HepG2 (cell line): ENCODE measurements at regions of chr12 and their contacts with region 1.

Region 1: DNA sequence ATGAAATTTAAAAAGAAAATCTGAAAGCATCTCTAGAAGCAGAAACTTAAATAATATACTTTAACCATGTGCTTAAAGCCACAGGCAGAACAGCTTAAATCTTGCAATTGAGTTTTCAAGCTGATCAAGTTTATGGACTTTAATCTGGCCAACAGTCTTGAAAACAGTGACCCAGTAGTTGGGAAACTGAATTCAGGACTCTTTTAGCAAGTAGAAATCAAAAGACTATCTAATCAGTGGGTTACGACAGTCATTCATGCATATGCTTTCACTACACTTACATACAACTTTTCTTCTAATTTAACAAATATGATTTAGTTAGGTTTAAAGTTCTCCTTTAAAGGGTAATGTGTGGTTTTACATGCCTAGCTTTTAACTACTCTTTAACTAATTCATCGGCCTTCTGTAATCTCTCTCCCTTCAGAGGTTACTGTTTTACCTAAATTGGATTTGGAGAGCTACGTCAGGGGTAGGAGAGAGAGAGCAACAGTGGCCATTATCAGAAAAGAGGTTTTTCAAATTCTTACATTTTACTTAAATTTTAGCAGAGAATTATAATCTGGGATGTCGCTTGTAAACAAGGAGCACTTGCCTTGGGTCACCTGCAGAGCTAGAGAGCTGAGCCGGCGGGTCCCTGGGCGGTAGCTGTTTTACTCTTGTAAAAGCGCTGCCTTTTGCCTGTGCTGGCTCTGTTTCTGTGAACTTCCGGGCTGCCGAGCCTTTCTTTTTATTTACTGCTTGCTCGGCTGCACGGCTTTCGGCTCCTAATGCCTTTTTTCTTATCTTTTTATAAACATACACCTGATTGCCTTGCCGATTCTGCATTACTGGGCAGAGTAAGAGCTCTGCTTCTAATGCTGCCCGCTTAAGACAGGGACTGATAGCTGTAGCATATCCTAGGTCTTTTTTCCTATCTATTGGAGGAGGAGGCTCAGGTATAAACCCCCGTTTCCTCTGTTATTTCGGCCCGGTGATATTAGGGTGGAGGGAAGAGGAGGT is 17.4 kb upstream of the LYZ start:
- DNase-seq: no peak
- ATAC-seq: peak; percentile 20
- H3K4me3 ChIP-seq: peak overlapping the region; percentile 64 to 97 (median 88)
- H3K27ac ChIP-seq: peak overlapping the region; percentile 99
- H3K4me1 ChIP-seq: peaks cover 69% of the 10 kb centered on the region
- H3K27me3 ChIP-seq: no peaks in the 10 kb centered on the region; a peak in 1 of 5 replicates
- CTCF ChIP-seq: no peak
- EP300 ChIP-seq: no peak
- POLR2A ChIP-seq: no peak; a peak in 1 of 4 replicates
- RAD21 ChIP-seq: no peak

Region 2: DNA sequence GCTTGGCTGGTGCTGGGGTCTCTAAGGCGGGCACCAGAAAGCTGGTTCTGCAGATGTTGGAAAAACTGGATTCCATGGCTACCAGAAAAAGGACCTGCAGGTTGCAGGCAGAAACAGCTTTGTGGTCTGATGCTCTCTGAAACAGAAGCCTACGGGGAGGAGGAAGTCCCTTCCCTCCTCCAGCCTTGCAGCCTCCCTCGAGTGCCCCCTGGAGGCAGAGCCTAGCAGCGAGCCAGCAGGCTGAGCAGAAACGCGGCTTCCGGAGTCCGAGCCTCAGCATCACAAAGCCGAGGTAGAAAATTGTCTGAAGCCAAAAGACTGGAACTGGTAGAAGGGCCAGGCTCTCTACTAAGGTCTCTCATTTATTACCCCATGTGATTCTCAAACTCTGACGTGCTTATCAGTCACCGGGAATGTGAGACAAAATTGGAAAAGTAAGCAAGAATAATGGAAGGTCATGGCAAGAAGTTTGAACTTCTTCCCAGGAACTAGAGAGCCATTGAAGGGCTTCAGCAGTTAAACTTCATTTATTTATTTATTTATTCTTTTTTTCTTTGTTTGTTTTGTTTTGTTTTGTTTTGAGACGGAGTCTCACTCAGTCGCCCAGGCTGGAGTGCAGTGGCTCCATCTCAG is 173.6 kb before region 1 on chr12:
- CTCF ChIA-PET with region 1: no interaction called
- POLR2A ChIA-PET with region 1: no interaction called
- in situ Hi-C with region 1: no loop called
- intact Hi-C with region 1: loop called (anchors 10 kb)
- DNase-seq: peak; percentile 63
- ATAC-seq: peak; percentile 93
- H3K4me3 ChIP-seq: peak overlapping the region in 1 of 3 experiments; percentile 40; a peak in 1 of 6 replicates
- H3K27ac ChIP-seq: no peak overlapping the region
- H3K4me1 ChIP-seq: peaks cover 19% of the 10 kb centered on the region
- H3K27me3 ChIP-seq: peaks cover 0 to 4% of the 10 kb centered on the region in 2 experiments; a peak in 1 of 5 replicates
- CTCF ChIP-seq: peak; percentile 93
- EP300 ChIP-seq: no peak
- POLR2A ChIP-seq: no peak
- RAD21 ChIP-seq: peak; percentile 53; the same call in 1 of the 2 replicates

Region 3: GRCh38 chr12:69290545-69291277 is 40.1 kb before region 1 on chr12:
- CTCF ChIA-PET with region 1: no interaction called
- POLR2A ChIA-PET with region 1: interaction called, 6 read pairs
- in situ Hi-C with region 1: no loop called
- intact Hi-C with region 1: loop called (anchors 2 kb)
- DNase-seq: peak; percentile 82
- ATAC-seq: peak; percentile 99
- H3K4me3 ChIP-seq: no peak overlapping the region
- H3K27ac ChIP-seq: no peak overlapping the region
- H3K4me1 ChIP-seq: peaks cover 11% of the 10 kb centered on the region
- H3K27me3 ChIP-seq: no peaks in the 10 kb centered on the region; a peak in 1 of 5 replicates
- CTCF ChIP-seq: peak; percentile 97
- EP300 ChIP-seq: no peak
- POLR2A ChIP-seq: no peak
- RAD21 ChIP-seq: peak; percentile 92

Region 4: DNA sequence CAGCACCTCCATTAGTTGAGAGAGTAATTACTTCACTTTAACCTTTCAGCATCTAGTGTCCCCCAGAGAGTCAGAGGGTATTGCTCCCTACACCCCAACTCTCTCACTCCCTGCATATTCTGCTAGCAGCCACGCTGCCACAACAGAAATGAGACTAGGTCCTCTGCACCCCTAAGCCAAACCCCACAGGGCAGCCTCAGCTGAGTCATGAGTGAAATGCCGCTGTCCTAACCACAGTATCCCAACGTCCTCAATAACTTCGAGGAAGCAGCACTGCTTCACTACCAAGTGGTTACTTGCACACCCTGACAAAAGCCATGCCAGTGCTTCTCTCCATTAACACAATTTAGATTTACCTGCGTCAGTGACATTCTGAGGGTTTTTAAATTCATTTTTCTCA is 10.6 kb after region 1 on chr12:
- CTCF ChIA-PET with region 1: no interaction called
- POLR2A ChIA-PET with region 1: interaction called, 94 read pairs
- in situ Hi-C with region 1: no loop called
- intact Hi-C with region 1: no loop called
- DNase-seq: no peak
- ATAC-seq: no peak
- H3K4me3 ChIP-seq: no peak overlapping the region
- H3K27ac ChIP-seq: peak overlapping the region; percentile 1
- H3K4me1 ChIP-seq: peaks cover 99% of the 10 kb centered on the region
- H3K27me3 ChIP-seq: no peaks in the 10 kb centered on the region
- CTCF ChIP-seq: no peak
- EP300 ChIP-seq: no peak
- POLR2A ChIP-seq: no peak
- RAD21 ChIP-seq: no peak

Region 5: GRCh38 chr12:69348162-69348938 is 17.6 kb after region 1 on chr12 and contains the start of gene LYZ:
- CTCF ChIA-PET with region 1: no interaction called
- POLR2A ChIA-PET with region 1: interaction called, 229 read pairs
- in situ Hi-C with region 1: no loop called
- intact Hi-C with region 1: loop called (anchors 1 kb)
- DNase-seq: peak; percentile 94
- ATAC-seq: peak; percentile 99
- H3K4me3 ChIP-seq: peak within 1 kb of the TSS; percentile 69 to 90 (median 72)
- H3K27ac ChIP-seq: peak within 1 kb of the TSS; percentile 92
- H3K4me1 ChIP-seq: peaks cover 65% of the 10 kb centered on the region
- H3K27me3 ChIP-seq: no peaks in the 10 kb centered on the region; a peak in 1 of 5 replicates
- CTCF ChIP-seq: peak; percentile 24; the same call in 1 of the 2 replicates
- EP300 ChIP-seq: peak in 1 of 2 experiments; percentile 98; a peak in 2 of 4 replicates
- POLR2A ChIP-seq: peak; percentile 84 to 95
- RAD21 ChIP-seq: no peak
- total RNA-seq, gene LYZ: 1,312 and 2,054 TPM in 2 replicates

Region 6: DNA sequence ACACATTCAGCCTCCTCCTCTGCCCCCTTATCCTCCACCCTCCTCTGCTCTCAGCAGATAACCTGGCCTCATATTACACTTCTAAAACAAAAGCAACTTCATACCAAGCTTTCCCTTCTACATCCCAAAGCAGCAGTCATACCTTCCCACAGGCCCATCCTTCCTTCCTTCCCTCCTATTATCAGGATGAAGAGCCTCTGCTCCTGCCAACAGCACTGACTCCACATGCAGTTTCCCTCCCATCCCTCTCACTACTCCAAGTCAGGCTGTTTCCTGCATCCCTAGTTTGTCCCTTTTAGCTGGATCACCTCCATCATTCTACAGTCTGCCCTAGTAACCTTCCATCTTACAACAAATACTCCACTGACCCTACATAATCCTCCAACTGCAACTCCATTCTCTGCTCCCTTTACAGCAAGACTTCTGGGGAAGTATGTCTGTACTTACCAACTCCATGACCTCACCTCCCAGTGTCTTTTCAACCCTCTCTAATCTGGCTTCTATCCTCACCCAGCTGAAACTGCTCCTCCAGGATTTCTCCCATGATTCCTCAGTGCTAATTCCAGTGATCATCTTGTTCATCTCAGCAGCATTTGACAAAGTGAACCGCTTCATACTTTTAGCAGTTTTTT is 23.9 kb after region 1 on chr12:
- CTCF ChIA-PET with region 1: no interaction called
- POLR2A ChIA-PET with region 1: interaction called, 229 read pairs
- in situ Hi-C with region 1: no loop called
- intact Hi-C with region 1: no loop called
- DNase-seq: peak; percentile 49
- ATAC-seq: peak; percentile 65
- H3K4me3 ChIP-seq: no peak overlapping the region
- H3K27ac ChIP-seq: peak overlapping the region; percentile 37
- H3K4me1 ChIP-seq: peaks cover 50% of the 10 kb centered on the region
- H3K27me3 ChIP-seq: no peaks in the 10 kb centered on the region; a peak in 1 of 5 replicates
- CTCF ChIP-seq: 0 out of 2 replicates have a peak, but pooled peaks have one; percentile 8
- EP300 ChIP-seq: no peak
- POLR2A ChIP-seq: peak; percentile 42 to 85; a peak in 3 of 4 replicates
- RAD21 ChIP-seq: no peak

Region 7: DNA sequence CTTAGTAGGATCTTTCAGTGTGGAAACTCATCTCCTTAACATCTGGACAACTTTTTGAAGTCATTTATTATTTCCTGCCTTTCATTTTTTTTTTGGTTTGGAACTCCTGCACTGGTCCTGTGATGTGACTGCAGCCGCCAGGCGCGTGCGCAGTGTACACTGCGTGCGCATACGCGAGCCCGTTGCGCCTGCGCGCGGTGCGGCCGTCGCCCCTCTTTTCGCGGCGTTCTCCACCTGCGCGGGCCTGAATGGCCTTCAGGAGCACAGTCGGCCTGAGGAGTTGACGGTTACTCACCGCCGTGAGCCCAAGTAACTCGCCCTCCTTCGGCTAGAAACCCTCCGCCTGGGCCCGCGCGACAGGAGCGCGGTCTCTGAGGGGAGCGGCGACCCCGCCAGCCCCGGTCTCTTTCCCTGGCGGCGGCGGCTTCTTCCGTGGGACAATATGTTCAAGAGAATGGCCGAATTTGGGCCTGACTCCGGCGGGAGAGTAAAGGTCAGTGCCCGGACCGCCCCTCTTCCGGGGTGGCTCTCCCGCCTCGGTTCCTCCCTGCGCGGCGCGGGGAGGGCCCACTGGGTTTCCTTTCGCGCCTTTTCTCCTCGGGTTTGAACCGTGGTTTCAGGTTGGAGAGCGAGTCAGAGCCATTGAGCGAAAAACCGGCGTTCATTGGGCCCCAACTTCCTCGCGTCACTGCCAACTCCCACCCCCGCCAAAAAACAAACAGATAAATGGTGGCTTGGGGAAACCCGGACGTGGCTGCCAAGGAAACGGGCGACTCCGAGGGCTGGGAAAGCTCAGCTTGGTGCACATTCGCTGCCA is 29.0 kb after region 1 on chr12 and contains the start of gene YEATS4:
- CTCF ChIA-PET with region 1: no interaction called
- POLR2A ChIA-PET with region 1: interaction called, 16 read pairs
- in situ Hi-C with region 1: no loop called
- intact Hi-C with region 1: no loop called
- DNase-seq: peak; percentile 95
- ATAC-seq: peak; percentile 90
- H3K4me3 ChIP-seq: peak within 1 kb of the TSS; percentile 71 to 75 (median 72)
- H3K27ac ChIP-seq: peak within 1 kb of the TSS; percentile 94
- H3K4me1 ChIP-seq: peaks cover 44% of the 10 kb centered on the region
- H3K27me3 ChIP-seq: no peaks in the 10 kb centered on the region
- CTCF ChIP-seq: no peak
- EP300 ChIP-seq: 0 out of 4 replicates have a peak, but pooled peaks of 1 of the 2 experiments have one; percentile 8
- POLR2A ChIP-seq: peak; percentile 76 to 86
- RAD21 ChIP-seq: peak; percentile 39; the same call in 1 of the 2 replicates
- total RNA-seq, gene YEATS4: 45.0 and 51.7 TPM in 2 replicates

Region 8: GRCh38 chr12:70628701-70629480 is 1298.1 kb after region 1 on chr12:
- CTCF ChIA-PET with region 1: no interaction called
- POLR2A ChIA-PET with region 1: no interaction called
- in situ Hi-C with region 1: no loop called
- intact Hi-C with region 1: no loop called
- DNase-seq: no peak
- ATAC-seq: no peak
- H3K4me3 ChIP-seq: no peak overlapping the region
- H3K27ac ChIP-seq: no peak overlapping the region
- H3K4me1 ChIP-seq: no peaks in the 10 kb centered on the region
- H3K27me3 ChIP-seq: no peaks in the 10 kb centered on the region
- CTCF ChIP-seq: no peak
- EP300 ChIP-seq: no peak
- POLR2A ChIP-seq: no peak
- RAD21 ChIP-seq: no peak